ENCODE measurements at regions of chr10 and their contacts with region 1.

Region 1: DNA sequence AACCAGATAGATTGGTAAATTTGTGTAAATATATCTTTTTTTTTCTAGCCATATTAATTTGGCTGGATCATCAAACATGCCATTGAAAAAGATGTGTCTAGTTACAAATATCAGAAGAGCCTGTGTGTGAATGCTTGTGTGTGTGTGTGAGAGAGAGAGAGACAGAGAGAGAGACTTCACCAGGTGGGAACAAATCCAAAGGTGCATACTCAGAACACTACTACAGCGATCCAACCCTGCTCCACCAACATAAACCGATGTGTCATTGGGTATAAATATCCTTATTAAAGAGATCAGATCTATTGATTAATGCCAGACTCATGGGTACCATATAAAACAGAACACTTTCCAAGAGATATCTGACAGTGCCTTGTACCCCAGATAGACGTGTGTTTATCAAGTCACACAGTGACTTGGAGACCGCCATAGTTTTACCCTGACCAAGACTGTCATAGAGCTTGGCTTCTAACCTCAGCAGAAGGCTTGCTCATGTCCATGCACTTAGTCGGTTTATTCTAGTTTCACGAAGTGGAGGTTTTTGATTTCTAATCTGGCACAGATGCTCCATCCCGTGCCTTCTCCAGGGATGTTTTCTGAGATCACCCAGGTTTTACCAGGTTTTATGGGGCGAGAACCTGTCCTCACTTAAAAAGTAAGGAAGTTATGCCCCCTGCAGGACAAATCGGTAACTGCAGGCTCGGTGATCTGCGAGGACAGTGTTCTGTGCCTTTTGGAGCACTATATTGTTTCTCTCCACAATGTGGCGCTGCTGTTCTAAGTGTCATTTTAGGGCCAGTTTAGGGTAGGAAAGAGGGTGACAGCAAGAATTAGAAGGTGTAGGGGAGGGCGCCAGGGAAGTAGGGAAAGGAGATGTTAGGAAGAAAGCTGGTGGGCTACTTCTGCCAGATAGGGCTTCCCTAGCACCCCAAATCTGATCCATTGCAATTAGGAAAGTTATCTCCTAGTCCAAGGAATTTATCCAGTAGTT is 29.3 kb upstream of the WNT8B start:
- DNase-seq: peak; percentile 79
- H3K4me3 ChIP-seq: no peak overlapping the region
- H3K27ac ChIP-seq: no peak overlapping the region
- H3K4me1 ChIP-seq: peaks cover 9% of the 10 kb centered on the region
- H3K27me3 ChIP-seq: no peaks in the 10 kb centered on the region
- CTCF ChIP-seq: peak; percentile 85 to 100 (median 100)

Region 2: GRCh38 chr10:100138921-100139496 is 294.5 kb before region 1 on chr10:
- dilution Hi-C with region 1: no loop called
- DNase-seq: no peak
- H3K4me3 ChIP-seq: no peak overlapping the region
- H3K27ac ChIP-seq: no peak overlapping the region
- H3K4me1 ChIP-seq: no peaks in the 10 kb centered on the region
- H3K27me3 ChIP-seq: no peaks in the 10 kb centered on the region
- CTCF ChIP-seq: no peak

Region 3: DNA sequence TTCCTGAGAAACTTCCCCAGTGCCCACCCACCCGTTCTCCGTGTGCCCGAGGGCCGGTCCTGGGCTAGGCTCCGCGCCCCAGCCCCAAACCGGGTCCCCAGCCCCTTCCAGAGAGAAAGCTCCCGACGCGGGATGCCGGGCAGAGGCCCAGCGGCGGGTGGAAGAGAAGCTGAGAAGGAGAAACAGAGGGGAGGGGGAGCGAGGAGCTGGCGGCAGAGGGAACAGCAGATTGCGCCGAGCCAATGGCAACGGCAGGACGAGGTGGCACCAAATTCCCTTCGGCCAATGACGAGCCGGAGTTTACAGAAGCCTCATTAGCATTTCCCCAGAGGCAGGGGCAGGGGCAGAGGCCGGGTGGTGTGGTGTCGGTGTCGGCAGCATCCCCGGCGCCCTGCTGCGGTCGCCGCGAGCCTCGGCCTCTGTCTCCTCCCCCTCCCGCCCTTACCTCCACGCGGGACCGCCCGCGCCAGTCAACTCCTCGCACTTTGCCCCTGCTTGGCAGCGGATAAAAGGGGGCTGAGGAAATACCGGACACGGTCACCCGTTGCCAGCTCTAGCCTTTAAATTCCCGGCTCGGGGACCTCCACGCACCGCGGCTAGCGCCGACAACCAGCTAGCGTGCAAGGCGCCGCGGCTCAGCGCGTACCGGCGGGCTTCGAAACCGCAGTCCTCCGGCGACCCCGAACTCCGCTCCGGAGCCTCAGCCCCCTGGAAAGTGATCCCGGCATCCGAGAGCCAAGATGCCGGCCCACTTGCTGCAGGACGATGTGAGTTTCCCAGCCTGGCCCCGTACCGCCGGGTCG is 86.6 kb before region 1 on chr10 and contains the start of gene SCD:
- dilution Hi-C with region 1: loop called (anchors 25 kb)
- DNase-seq: peak; percentile 84
- H3K4me3 ChIP-seq: peak within 1 kb of the TSS; percentile 81 to 96 (median 84)
- H3K27ac ChIP-seq: peak within 1 kb of the TSS; percentile 59
- H3K4me1 ChIP-seq: peaks cover 42% of the 10 kb centered on the region
- H3K27me3 ChIP-seq: no peaks in the 10 kb centered on the region
- CTCF ChIP-seq: no peak
- polyA plus RNA-seq, gene SCD: 900 to 1,358 TPM (median 1,275 TPM) in 3 replicates

Measured in keratinocyte (primary cell).